ENCODE measurements at regions of chrX and their contacts with region 1.

Region 1: GRCh38 chrX:19225924-19226323 is 103.7 kb upstream of the ADGRG2 start:
- DNase-seq: no peak
- H3K4me3 ChIP-seq: no peak overlapping the region
- H3K27ac ChIP-seq: no peak overlapping the region
- H3K4me1 ChIP-seq: no peaks in the 10 kb centered on the region
- H3K27me3 ChIP-seq: no peaks in the 10 kb centered on the region
- CTCF ChIP-seq: peak in 1 of 2 donors; percentile 49

Region 2: GRCh38 chrX:19040373-19040772 is 185.6 kb before region 1 on chrX:
- CTCF ChIA-PET with region 1: no interaction called
- dilution Hi-C with region 1: no loop called
- in situ Hi-C with region 1: no loop called
- intact Hi-C with region 1: loop called (anchors 10 kb)
- DNase-seq: no peak
- H3K4me3 ChIP-seq: no peak overlapping the region
- H3K27ac ChIP-seq: no peak overlapping the region
- H3K4me1 ChIP-seq: no peaks in the 10 kb centered on the region
- H3K27me3 ChIP-seq: no peaks in the 10 kb centered on the region
- CTCF ChIP-seq: peak; percentile 12 to 36

Region 3: GRCh38 chrX:19107035-19107434 is 118.9 kb before region 1 on chrX:
- CTCF ChIA-PET with region 1: no interaction called
- dilution Hi-C with region 1: no loop called
- in situ Hi-C with region 1: no loop called
- intact Hi-C with region 1: loop called (anchors 2 kb)
- DNase-seq: no peak
- H3K4me3 ChIP-seq: no peak overlapping the region
- H3K27ac ChIP-seq: no peak overlapping the region
- H3K4me1 ChIP-seq: no peaks in the 10 kb centered on the region
- H3K27me3 ChIP-seq: no peaks in the 10 kb centered on the region
- CTCF ChIP-seq: no peak

Region 4: DNA sequence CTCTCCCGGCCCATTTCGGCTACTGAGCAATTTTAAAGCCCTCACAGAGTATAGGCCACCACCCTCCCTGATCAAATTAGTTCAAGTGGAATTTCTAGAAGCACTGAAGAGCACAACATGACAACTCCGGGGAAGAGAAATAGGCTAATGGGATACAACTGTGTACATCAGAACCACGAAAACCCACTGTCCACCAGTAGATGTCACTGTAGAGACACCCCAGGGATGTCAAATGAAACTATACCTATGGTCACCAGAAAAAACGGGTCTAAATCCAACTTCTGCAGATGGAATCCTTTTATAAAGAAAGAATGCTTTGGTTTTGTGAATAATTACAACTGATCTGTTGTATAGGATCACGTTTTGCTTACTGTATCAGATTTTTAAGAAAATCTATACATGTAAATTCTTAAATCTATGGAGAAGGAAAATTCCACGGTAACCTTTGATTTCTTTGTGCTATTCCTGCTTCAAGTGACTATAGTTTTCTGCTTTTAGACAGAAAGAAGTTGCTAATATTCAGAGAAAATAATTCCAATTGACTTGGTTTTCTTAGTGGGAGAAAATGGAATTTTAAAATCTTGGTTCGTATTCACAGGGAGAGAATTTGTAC is 318.9 kb after region 1 on chrX:
- CTCF ChIA-PET with region 1: no interaction called
- dilution Hi-C with region 1: no loop called
- in situ Hi-C with region 1: no loop called
- intact Hi-C with region 1: no loop called
- DNase-seq: peak; percentile 36
- H3K4me3 ChIP-seq: no peak overlapping the region
- H3K27ac ChIP-seq: no peak overlapping the region
- H3K4me1 ChIP-seq: no peaks in the 10 kb centered on the region
- H3K27me3 ChIP-seq: no peaks in the 10 kb centered on the region
- CTCF ChIP-seq: peak; percentile 79 to 82

Measured in mammary epithelial cell (primary cell).